ENCODE measurements at regions of chr1 and their contacts with region 1.

Region 1: DNA sequence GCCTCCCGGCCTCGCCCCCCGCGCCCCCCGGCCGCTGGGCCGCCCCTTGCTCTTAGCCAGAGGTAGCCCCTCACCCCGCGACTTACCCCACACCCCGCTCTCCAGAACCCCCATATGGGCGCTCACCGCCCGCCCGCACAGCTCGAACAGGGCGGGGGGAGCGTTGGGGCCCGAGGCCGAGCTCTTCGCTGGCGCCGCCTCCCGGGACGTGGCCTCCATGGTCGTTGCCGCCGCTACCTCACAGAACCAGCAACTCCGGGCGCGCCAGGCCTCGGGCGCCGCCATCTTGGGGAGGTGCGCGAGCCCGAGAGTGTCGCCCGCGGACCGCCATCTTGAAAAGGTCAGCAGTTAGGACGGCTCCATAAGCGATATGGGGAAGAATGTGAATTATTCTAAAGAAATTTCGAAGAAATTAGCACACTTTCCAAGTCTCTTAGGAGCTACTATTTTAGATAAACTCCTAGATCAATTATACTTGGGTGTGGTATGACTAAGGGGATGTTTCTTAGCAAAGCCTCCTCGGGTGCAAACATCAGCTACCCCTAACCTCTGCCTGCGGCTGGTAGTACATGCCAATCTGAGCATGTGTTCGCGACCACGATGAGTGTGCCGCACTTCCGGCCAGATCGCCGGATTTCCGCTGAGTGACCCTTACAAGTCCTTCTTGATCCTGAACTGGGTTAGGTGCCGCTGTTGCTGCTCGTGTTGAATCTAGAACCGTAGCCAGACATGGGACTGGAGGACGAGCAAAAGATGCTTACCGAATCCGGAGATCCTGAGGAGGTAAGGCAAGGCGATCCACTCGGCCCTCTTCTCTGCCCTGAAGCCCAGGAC is at the starts of genes LRRC41 and UQCRH:
- DNase-seq: peak; percentile 92
- H3K4me3 Mint-ChIP-seq: peak within 1 kb of the TSS; percentile 100
- H3K27ac Mint-ChIP-seq: peak within 1 kb of the TSS; percentile 99
- H3K4me1 Mint-ChIP-seq: peaks cover 35% of the 10 kb centered on the region
- H3K27me3 Mint-ChIP-seq: no peaks in the 10 kb centered on the region
- total RNA-seq, gene LRRC41: 62.1 and 62.6 TPM in 2 replicates
- total RNA-seq, gene UQCRH: 258 and 268 TPM in 2 replicates

Region 2: GRCh38 chr1:45594412-45594811 is 708.8 kb before region 1 on chr1:
- intact Hi-C with region 1: no loop called
- DNase-seq: no peak
- H3K4me3 Mint-ChIP-seq: no peak overlapping the region
- H3K27ac Mint-ChIP-seq: peak overlapping the region; percentile 34
- H3K4me1 Mint-ChIP-seq: peaks cover 10% of the 10 kb centered on the region
- H3K27me3 Mint-ChIP-seq: no peaks in the 10 kb centered on the region

Region 3: GRCh38 chr1:45803301-45803780 is 499.9 kb before region 1 on chr1 and contains the start of gene MAST2:
- intact Hi-C with region 1: loop called (anchors 5 kb)
- DNase-seq: peak; percentile 87
- H3K4me3 Mint-ChIP-seq: peak within 1 kb of the TSS; percentile 99
- H3K27ac Mint-ChIP-seq: peak within 1 kb of the TSS; percentile 93
- H3K4me1 Mint-ChIP-seq: peaks cover 32% of the 10 kb centered on the region
- H3K27me3 Mint-ChIP-seq: no peaks in the 10 kb centered on the region
- total RNA-seq, gene MAST2: 32.0 and 37.2 TPM in 2 replicates

Region 4: GRCh38 chr1:46247436-46248121 is 55.7 kb before region 1 on chr1 and contains the start of gene RAD54L:
- intact Hi-C with region 1: loop called (anchors 1 kb)
- DNase-seq: peak; percentile 95
- H3K4me3 Mint-ChIP-seq: peak within 1 kb of the TSS; percentile 97
- H3K27ac Mint-ChIP-seq: peak within 1 kb of the TSS; percentile 94
- H3K4me1 Mint-ChIP-seq: peaks cover 39% of the 10 kb centered on the region
- H3K27me3 Mint-ChIP-seq: no peaks in the 10 kb centered on the region
- total RNA-seq, gene RAD54L: 49.7 and 50.2 TPM in 2 replicates

Region 5: DNA sequence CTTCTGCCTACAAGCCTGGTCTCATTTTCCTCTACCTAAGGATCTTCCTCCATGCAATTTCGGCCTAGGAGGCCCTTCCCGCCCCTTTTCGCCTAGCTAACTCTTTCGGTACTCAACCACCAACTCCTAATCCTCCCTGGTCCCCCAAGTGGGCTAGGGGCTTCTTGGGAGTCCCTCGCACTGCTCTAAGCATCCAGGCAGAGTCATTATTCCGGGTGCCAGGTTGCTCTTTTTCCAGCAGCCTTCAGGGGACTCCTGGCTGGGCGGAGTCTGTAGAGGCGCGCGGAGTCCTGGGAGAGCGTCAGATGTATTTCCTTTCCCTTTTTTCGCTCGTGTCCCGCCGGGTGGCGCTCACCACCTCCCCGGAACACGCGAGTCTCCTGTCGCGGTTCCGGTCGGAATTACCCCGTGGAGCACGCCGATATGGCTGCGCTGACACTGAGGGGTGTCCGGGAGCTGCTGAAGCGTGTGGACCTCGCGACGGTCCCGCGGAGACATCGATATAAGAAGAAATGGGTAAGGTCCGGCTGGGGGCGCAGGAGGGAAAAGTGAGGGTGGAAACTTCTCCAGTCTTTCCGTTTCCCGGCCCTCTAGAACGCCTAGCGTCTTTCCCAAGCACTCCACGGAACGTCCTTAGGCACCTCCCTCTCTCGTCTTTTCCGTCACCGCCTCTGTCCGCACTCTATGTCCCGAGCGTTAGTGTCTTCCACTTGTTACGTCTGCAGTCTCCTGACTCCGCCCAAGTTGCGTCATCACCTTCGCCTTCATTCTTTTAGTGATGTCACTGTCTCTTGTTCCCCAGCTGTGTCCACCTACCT is 37.4 kb after region 1 on chr1 and contains the start of gene NSUN4:
- intact Hi-C with region 1: loop called (anchors 1 kb)
- DNase-seq: peak; percentile 83
- H3K4me3 Mint-ChIP-seq: peak within 1 kb of the TSS; percentile 100
- H3K27ac Mint-ChIP-seq: peak within 1 kb of the TSS; percentile 100
- H3K4me1 Mint-ChIP-seq: peaks cover 39% of the 10 kb centered on the region
- H3K27me3 Mint-ChIP-seq: no peaks in the 10 kb centered on the region
- total RNA-seq, gene NSUN4: 37.6 and 39.6 TPM in 2 replicates

Measured in activated T-helper 1 cell treated with anti-CD3 and anti-CD28 coated beads, Interleukin-12 subunit alpha, Interleukin-12 subunit beta, Interleukin-2, Interleukin-4 antibody, amounts not matched to agents 30 ng/mL and 10 ng/mL and 1 ng/mL, durations not matched to agents 14 hours and 24 hours and 36 hours (primary cell).